Breast epithelium (tissue), 4 donors: ENCODE measurements at regions of chr7 and their contacts with region 1.

Region 1: GRCh38 chr7:94649450-94649849 is 6.5 kb downstream of the SGCE start:
- DNase-seq: no peak
- H3K4me3 ChIP-seq: peak overlapping the region in 1 of 3 donors; percentile 26
- H3K27ac ChIP-seq: no peak overlapping the region
- H3K4me1 ChIP-seq: no peaks in the 10 kb centered on the region
- H3K27me3 ChIP-seq: no peaks in the 10 kb centered on the region
- CTCF ChIP-seq: no peak
- POLR2A ChIP-seq: no peak

Region 2: DNA sequence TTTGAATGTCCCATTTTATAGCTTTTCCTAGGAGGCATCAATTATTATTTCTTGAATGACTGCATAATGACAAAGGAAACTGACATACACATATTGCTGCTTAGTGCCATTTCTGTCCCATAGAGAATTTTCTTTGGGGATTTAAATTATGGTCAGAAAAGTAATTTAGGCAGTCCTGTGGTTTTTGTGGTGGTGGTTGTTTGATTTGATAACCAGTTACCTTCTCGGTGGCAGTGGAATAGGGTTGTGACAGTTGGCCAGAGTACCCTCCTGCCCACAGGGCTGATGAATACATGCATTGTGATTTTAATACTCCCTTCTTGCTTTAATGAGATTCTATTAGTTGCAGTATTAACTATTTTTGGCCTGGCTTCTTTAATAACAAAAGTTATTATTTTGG is 13.1 kb after region 1 on chr7:
- intact Hi-C with region 1: no loop called
- DNase-seq: no peak
- H3K4me3 ChIP-seq: no peak overlapping the region
- H3K27ac ChIP-seq: no peak overlapping the region
- H3K4me1 ChIP-seq: no peaks in the 10 kb centered on the region
- H3K27me3 ChIP-seq: no peaks in the 10 kb centered on the region
- CTCF ChIP-seq: no peak
- POLR2A ChIP-seq: no peak

Region 3: GRCh38 chr7:95476904-95477594 is 827.6 kb after region 1 on chr7:
- intact Hi-C with region 1: loop called (anchors 10 kb)
- DNase-seq: peak in 1 of 2 donors; percentile 47
- H3K4me3 ChIP-seq: no peak overlapping the region
- H3K27ac ChIP-seq: no peak overlapping the region
- H3K4me1 ChIP-seq: no peaks in the 10 kb centered on the region
- H3K27me3 ChIP-seq: no peaks in the 10 kb centered on the region
- CTCF ChIP-seq: peak; percentile 25 to 77 (median 76)
- POLR2A ChIP-seq: no peak

Region 4: DNA sequence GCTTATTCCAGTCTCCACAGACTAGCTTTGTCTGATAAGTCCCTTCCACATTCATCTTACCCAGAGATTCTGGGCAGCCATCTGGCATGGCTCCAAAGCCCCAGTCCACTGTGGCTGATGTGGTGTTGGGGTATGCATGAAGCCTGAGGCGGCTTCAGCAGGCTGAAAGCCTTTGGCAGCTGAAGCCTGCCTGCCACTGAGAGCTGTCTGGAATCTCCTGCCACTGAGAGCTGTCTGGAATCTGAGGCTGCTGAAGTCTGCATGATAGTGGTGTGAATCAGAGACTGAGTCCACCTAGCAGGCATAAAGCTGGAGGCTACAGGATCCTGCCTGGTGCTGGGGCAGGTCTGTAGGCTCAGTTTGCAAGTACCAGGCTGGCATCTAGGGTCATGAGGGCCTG is 1210.0 kb after region 1 on chr7:
- intact Hi-C with region 1: no loop called
- DNase-seq: no peak
- H3K4me3 ChIP-seq: no peak overlapping the region
- H3K27ac ChIP-seq: no peak overlapping the region
- H3K4me1 ChIP-seq: no peaks in the 10 kb centered on the region
- H3K27me3 ChIP-seq: no peaks in the 10 kb centered on the region
- CTCF ChIP-seq: no peak
- POLR2A ChIP-seq: no peak